ENCODE measurements at regions of chr4 and their contacts with region 1.

Region 1: DNA sequence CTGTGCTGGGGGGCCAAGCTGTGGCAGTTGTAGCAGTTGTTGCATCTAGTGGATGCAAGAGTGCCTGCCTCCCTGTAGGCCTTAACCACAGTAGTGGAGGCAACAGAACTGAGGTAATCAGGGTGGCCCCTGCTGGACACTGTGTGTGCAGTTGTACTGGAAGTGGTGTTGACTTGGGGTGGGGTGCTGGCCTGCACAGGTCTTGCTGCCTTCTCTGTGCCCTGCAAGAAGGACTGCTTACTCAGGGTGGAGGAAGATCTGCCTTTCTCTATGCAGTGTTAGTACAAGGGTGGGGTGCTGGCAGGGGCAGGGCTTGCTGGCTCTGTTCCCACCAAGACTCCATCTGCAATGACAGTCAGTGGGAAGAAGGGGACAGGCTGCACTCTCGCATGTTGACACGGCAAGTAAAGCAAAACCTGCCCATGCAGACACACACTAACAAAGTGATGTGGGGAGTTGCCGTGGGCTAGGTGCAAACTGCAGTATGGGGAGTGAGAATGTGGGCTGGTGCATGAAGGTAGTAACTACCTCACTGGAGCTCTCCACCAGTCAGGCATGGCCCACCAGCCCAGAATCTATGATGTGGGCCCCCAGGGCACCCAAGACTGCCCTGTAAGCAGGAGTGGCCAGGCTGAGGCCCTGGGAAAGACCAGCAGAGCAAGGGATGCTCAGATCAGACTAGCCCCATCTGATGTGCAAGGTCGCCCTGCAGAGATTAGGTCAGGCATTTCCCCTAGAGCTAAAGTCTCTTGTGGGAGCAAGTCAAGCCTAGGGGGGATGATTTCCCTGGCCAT is 594.9 kb downstream of the TECRL start:
- DNase-seq: no peak
- ATAC-seq: no peak
- H3K4me3 ChIP-seq: no peak overlapping the region
- H3K4me3 Mint-ChIP-seq: no peak overlapping the region
- H3K27ac ChIP-seq: no peak overlapping the region
- H3K27ac Mint-ChIP-seq: no peak overlapping the region
- H3K4me1 ChIP-seq: no peaks in the 10 kb centered on the region
- H3K4me1 Mint-ChIP-seq: no peaks in the 10 kb centered on the region
- H3K27me3 ChIP-seq: no peaks in the 10 kb centered on the region
- H3K27me3 Mint-ChIP-seq: no peaks in the 10 kb centered on the region

Region 2: DNA sequence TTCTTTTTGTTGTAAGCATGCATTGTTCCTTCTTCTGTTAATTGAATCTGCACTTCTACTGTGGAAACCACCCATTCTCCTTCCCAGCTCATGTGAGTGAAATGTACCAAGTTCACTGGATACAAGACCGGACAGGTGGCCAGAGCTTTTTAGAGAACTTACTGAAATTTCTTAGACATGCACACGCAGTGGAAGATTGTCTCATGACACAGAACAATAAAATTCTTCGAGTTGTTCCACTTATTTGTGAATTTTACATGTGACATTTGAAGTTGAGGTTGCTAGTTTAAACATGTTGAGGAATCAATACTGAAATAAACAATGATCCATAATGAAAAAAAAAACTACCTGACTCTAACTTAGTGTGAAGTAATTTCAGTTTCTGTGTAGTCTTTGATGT is 26.9 kb after region 1 on chr4:
- CTCF ChIA-PET with region 1: no interaction called
- POLR2A ChIA-PET with region 1: no interaction called
- intact Hi-C with region 1: no loop called
- DNase-seq: no peak
- ATAC-seq: no peak
- H3K4me3 ChIP-seq: no peak overlapping the region
- H3K4me3 Mint-ChIP-seq: no peak overlapping the region
- H3K27ac ChIP-seq: no peak overlapping the region
- H3K27ac Mint-ChIP-seq: no peak overlapping the region
- H3K4me1 ChIP-seq: no peaks in the 10 kb centered on the region
- H3K4me1 Mint-ChIP-seq: no peaks in the 10 kb centered on the region
- H3K27me3 ChIP-seq: no peaks in the 10 kb centered on the region
- H3K27me3 Mint-ChIP-seq: no peaks in the 10 kb centered on the region

Region 3: GRCh38 chr4:63851496-63851895 is 37.1 kb after region 1 on chr4:
- CTCF ChIA-PET with region 1: no interaction called
- POLR2A ChIA-PET with region 1: no interaction called
- intact Hi-C with region 1: no loop called
- DNase-seq: no peak
- ATAC-seq: no peak
- H3K4me3 ChIP-seq: no peak overlapping the region
- H3K4me3 Mint-ChIP-seq: no peak overlapping the region
- H3K27ac ChIP-seq: no peak overlapping the region
- H3K27ac Mint-ChIP-seq: no peak overlapping the region
- H3K4me1 ChIP-seq: no peaks in the 10 kb centered on the region
- H3K4me1 Mint-ChIP-seq: no peaks in the 10 kb centered on the region
- H3K27me3 ChIP-seq: no peaks in the 10 kb centered on the region
- H3K27me3 Mint-ChIP-seq: no peaks in the 10 kb centered on the region

Region 4: GRCh38 chr4:63869370-63869769 is 55.0 kb after region 1 on chr4:
- CTCF ChIA-PET with region 1: no interaction called
- POLR2A ChIA-PET with region 1: no interaction called
- intact Hi-C with region 1: loop called in 1 of 2 experiments (anchors 10 kb)
- DNase-seq: no peak
- ATAC-seq: no peak
- H3K4me3 ChIP-seq: no peak overlapping the region
- H3K4me3 Mint-ChIP-seq: no peak overlapping the region
- H3K27ac ChIP-seq: no peak overlapping the region
- H3K27ac Mint-ChIP-seq: no peak overlapping the region
- H3K4me1 ChIP-seq: no peaks in the 10 kb centered on the region
- H3K4me1 Mint-ChIP-seq: no peaks in the 10 kb centered on the region
- H3K27me3 ChIP-seq: no peaks in the 10 kb centered on the region
- H3K27me3 Mint-ChIP-seq: no peaks in the 10 kb centered on the region